IMR-90 (cell line): ENCODE measurements at regions of chr3 and their contacts with region 1.

Region 1: DNA sequence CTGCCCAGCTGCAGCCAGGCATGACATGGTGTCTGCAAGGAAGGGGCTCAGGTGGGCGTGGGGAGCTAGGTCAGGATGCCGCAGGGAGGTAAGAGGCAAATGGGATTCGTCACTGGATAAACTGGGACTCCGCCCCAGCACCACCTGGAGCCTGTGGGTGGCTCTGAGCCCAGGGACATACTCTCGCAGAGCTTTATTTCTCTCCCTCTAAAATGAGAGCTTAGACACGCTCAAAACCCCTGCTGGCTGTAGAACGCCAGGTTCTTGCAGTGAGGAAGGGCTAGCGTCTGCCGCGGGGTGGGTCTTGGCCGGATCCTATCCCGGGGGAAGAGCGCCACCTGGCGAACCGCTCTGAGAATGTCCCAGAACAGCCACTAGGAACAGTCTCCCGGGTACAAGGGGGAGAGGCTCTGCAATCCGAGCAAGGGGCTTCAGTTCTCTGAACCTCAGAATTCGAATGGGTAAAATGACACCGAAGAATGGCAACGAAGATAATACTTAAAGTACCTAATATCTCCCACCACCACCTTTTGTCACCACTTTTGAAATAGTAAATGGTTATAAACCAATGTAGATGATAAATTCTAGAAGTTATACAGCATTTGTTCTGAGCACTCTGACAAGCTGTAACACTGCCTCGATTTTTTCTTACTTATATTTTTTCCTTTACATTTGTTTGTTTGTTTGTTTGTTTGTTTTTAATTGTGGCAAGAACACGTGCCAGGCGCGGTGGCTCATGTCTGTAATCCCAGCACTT is 53.2 kb upstream of the SRGAP3 start:
- DNase-seq: peak; percentile 71
- ATAC-seq: peak; percentile 99
- H3K4me3 ChIP-seq: no peak overlapping the region
- H3K27ac ChIP-seq: no peak overlapping the region
- H3K4me1 ChIP-seq: no peaks in the 10 kb centered on the region
- H3K27me3 ChIP-seq: peaks cover 7% of the 10 kb centered on the region
- CTCF ChIP-seq: peak; percentile 95
- POLR2A ChIP-seq: peak; percentile 35; the same call in 1 of the 2 replicates
- RAD21 ChIP-seq: peak; percentile 92

Region 2: GRCh38 chr3:8607234-8608040 is 695.2 kb before region 1 on chr3:
- CTCF ChIA-PET with region 1: no interaction called
- POLR2A ChIA-PET with region 1: no interaction called
- dilution Hi-C with region 1: no loop called
- in situ Hi-C with region 1: no loop called
- intact Hi-C with region 1: no loop called
- DNase-seq: peak; percentile 78
- ATAC-seq: peak; percentile 91
- H3K4me3 ChIP-seq: no peak overlapping the region
- H3K27ac ChIP-seq: no peak overlapping the region
- H3K4me1 ChIP-seq: peaks cover 7% of the 10 kb centered on the region
- H3K27me3 ChIP-seq: no peaks in the 10 kb centered on the region
- CTCF ChIP-seq: peak; percentile 77
- POLR2A ChIP-seq: no peak
- RAD21 ChIP-seq: peak; percentile 90

Region 3: DNA sequence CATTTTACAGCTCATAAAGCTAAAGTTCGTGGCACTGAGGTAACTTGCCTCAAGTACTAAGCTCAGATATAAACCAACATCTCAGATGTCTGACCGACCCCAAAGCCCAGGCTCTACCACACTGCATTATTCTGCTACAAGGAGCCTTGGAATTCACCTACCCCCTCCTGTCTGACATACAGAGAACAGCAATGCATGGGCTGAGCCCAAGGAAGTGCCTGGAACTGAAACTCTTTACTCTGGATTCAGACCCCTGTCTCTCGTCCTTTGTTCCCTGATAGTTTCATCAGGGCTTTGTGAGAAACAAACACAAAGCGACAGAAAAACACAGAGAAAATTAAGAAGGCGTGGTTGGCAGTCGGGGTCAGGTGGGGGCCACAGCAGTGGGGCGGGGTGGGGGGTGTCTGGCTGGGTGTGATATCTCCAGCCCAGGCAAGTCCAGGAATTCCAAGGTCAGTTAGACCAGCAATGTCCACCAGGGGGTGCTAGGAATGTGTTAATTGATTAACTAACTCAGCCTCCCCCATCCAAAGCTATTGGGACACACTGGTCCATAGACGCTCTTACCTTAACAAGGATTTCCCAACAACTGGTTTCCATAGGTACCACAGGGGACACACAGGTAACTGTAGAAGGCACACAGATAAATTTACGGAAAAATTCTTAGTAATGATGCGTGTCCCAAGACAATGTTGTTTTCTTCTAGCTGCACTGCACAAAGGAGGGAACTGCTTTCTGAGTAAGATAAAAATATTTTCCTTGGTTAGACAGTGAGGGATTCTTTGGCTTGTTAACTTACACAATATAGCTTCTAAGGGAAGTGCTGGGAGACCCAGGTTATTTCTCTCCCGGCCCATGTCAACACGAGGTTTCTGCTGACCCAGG is 639.2 kb before region 1 on chr3:
- CTCF ChIA-PET with region 1: no interaction called
- POLR2A ChIA-PET with region 1: no interaction called
- dilution Hi-C with region 1: no loop called
- in situ Hi-C with region 1: no loop called
- intact Hi-C with region 1: loop called (anchors 1 kb)
- DNase-seq: peak; percentile 61
- ATAC-seq: peak; percentile 67
- H3K4me3 ChIP-seq: no peak overlapping the region
- H3K27ac ChIP-seq: no peak overlapping the region
- H3K4me1 ChIP-seq: peaks cover 8% of the 10 kb centered on the region
- H3K27me3 ChIP-seq: no peaks in the 10 kb centered on the region; the same call in 1 of the 2 replicates
- CTCF ChIP-seq: peak; percentile 58
- POLR2A ChIP-seq: no peak
- RAD21 ChIP-seq: peak; percentile 55

Region 4: GRCh38 chr3:8793242-8793641 is 509.4 kb before region 1 on chr3:
- CTCF ChIA-PET with region 1: no interaction called
- POLR2A ChIA-PET with region 1: no interaction called
- dilution Hi-C with region 1: no loop called
- in situ Hi-C with region 1: loop called (anchors 25 kb)
- intact Hi-C with region 1: no loop called
- DNase-seq: peak; percentile 85
- ATAC-seq: peak; percentile 42; the same call in 1 of the 2 replicates
- H3K4me3 ChIP-seq: no peak overlapping the region
- H3K27ac ChIP-seq: no peak overlapping the region
- H3K4me1 ChIP-seq: peaks cover 2% of the 10 kb centered on the region; the same call in 1 of the 2 replicates
- H3K27me3 ChIP-seq: no peaks in the 10 kb centered on the region
- CTCF ChIP-seq: no peak
- POLR2A ChIP-seq: no peak
- RAD21 ChIP-seq: no peak

Region 5: GRCh38 chr3:8938021-8938420 is 364.6 kb before region 1 on chr3:
- CTCF ChIA-PET with region 1: no interaction called
- POLR2A ChIA-PET with region 1: no interaction called
- dilution Hi-C with region 1: no loop called
- in situ Hi-C with region 1: no loop called
- intact Hi-C with region 1: loop called (anchors 1 kb)
- DNase-seq: peak; percentile 59
- ATAC-seq: peak; percentile 62
- H3K4me3 ChIP-seq: no peak overlapping the region
- H3K27ac ChIP-seq: no peak overlapping the region
- H3K4me1 ChIP-seq: peaks cover 11% of the 10 kb centered on the region; the same call in 1 of the 2 replicates
- H3K27me3 ChIP-seq: no peaks in the 10 kb centered on the region
- CTCF ChIP-seq: peak; percentile 50
- POLR2A ChIP-seq: no peak
- RAD21 ChIP-seq: peak; percentile 51

Region 6: GRCh38 chr3:8970971-8971589 is 331.5 kb before region 1 on chr3:
- CTCF ChIA-PET with region 1: interaction called, 4 read pairs
- POLR2A ChIA-PET with region 1: interaction called, 5 read pairs
- dilution Hi-C with region 1: no loop called
- in situ Hi-C with region 1: loop called (anchors 5 kb)
- intact Hi-C with region 1: loop called (anchors 1 kb)
- DNase-seq: peak; percentile 63
- ATAC-seq: peak; percentile 94
- H3K4me3 ChIP-seq: no peak overlapping the region
- H3K27ac ChIP-seq: no peak overlapping the region
- H3K4me1 ChIP-seq: no peaks in the 10 kb centered on the region
- H3K27me3 ChIP-seq: peaks cover 2% of the 10 kb centered on the region; the same call in 1 of the 2 replicates
- CTCF ChIP-seq: peak; percentile 97
- POLR2A ChIP-seq: no peak
- RAD21 ChIP-seq: peak; percentile 97

Region 7: DNA sequence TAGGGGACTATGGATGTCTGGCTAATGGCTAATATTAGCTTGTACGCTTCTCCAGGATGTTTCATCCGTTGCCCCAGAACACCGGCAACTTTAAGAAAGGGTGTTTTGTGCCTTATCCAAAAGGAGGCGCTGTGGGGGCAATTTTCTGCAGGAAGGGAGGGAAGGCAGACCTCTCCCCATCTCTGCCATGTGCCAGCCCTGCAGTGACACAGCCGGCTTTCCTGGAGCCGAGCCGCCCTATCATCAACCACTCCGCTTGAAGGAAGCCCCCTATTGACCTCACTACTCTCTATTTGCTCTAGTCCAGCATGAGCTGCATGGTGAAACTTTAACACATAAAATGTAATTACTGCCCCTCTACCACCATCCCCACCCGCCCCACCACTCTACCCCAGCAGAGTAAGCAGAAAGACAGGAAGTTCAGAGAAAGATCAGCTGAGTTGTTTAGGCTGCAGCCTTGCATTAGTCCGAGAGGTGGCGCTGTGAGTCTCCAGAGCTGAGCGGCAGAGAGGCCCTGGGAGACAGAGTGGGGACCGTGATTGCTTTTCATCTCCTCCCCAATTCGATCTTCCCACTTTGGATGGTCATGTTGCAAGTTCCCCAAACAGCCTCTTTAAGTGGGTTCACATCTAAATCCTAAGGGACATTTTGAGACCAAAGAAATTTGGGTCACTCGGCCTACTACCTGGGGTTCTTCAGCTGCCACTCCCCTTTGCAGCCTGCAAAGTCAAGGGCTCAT is 314.8 kb before region 1 on chr3:
- CTCF ChIA-PET with region 1: interaction called, 8 read pairs
- POLR2A ChIA-PET with region 1: no interaction called
- dilution Hi-C with region 1: no loop called
- in situ Hi-C with region 1: no loop called
- intact Hi-C with region 1: loop called (anchors 1 kb)
- DNase-seq: peak; percentile 40
- ATAC-seq: peak; percentile 83
- H3K4me3 ChIP-seq: no peak overlapping the region
- H3K27ac ChIP-seq: no peak overlapping the region
- H3K4me1 ChIP-seq: no peaks in the 10 kb centered on the region
- H3K27me3 ChIP-seq: peaks cover 4% of the 10 kb centered on the region
- CTCF ChIP-seq: peak; percentile 65
- POLR2A ChIP-seq: no peak
- RAD21 ChIP-seq: peak; percentile 55

Region 8: DNA sequence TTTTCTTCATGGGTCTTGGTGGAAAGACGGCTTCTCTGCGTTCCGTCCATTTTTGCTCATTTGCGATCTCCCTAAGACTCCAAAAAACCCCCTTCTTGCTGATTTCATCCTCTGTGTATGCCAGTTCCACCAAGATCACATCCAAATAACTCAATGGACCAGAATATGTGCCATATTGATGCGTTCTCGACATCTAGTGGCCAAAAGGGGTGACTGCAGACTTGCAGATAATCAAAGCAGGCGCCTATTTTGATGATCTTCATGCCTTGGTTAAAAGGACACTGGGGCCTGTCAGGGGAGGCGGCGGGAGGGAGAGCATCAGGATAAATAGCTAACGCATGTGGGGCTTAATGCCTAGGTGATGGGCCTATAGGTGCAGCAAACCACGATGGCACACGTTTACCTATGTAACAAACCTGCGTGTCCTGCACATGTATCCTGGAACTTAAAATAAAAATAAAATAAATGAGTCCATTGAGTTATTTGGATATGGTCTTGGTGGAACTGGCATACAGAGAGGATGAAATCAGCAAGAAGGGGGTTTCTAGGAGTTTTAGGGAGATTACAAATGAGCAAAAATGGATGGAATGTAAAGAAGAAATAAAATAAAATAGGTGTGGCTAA is 235.1 kb before region 1 on chr3:
- CTCF ChIA-PET with region 1: no interaction called
- POLR2A ChIA-PET with region 1: no interaction called
- dilution Hi-C with region 1: no loop called
- in situ Hi-C with region 1: no loop called
- intact Hi-C with region 1: loop called (anchors 1 kb)
- DNase-seq: peak; percentile 71
- ATAC-seq: peak; percentile 92
- H3K4me3 ChIP-seq: no peak overlapping the region
- H3K27ac ChIP-seq: no peak overlapping the region
- H3K4me1 ChIP-seq: no peaks in the 10 kb centered on the region
- H3K27me3 ChIP-seq: peaks cover 14% of the 10 kb centered on the region
- CTCF ChIP-seq: peak; percentile 96
- POLR2A ChIP-seq: peak; percentile 56; the same call in 1 of the 2 replicates
- RAD21 ChIP-seq: peak; percentile 92

Region 9: GRCh38 chr3:9260305-9260704 is 42.3 kb before region 1 on chr3:
- CTCF ChIA-PET with region 1: no interaction called
- POLR2A ChIA-PET with region 1: no interaction called
- dilution Hi-C with region 1: no loop called
- in situ Hi-C with region 1: no loop called
- intact Hi-C with region 1: no loop called
- DNase-seq: no peak
- ATAC-seq: no peak
- H3K4me3 ChIP-seq: no peak overlapping the region
- H3K27ac ChIP-seq: no peak overlapping the region
- H3K4me1 ChIP-seq: no peaks in the 10 kb centered on the region
- H3K27me3 ChIP-seq: no peaks in the 10 kb centered on the region
- CTCF ChIP-seq: no peak
- POLR2A ChIP-seq: no peak
- RAD21 ChIP-seq: no peak